CD4-positive, alpha-beta T cell (primary cell): ENCODE measurements at regions of chr14 and their contacts with region 1.

Region 1: DNA sequence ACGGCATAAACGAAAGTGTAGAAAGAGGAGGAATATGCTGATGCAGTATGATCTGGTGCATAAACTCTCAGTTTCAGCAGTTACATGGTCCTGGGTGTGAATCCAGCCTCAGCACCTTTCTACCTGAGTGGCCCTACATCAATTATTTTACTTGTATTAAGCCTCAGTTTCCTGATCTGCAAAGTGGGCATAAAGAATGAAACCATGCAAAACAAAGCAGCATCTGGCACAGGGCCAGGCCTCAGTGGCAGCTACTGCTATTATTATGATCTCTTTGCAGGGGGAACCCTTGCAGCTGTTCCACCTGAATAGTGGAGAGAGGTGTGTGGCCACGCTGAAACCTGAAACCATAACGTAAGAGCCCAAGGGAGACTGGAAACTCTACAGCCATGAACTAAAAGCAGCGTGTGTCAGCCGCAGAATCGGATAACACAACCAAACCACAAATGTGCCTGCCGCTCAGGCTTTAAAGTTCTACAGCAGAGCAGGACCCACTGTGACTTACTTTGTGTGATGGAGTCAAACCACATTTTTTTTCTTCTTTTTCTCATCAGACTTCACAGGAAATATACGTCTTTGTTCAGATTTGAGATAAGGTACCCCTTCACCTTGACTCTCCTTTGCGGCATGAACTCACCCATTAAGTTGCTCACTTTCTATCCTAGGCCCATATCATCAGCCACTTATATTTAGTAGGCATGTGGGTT is 29.2 kb upstream of the FOS start:
- DNase-seq: peak; percentile 67 to 97 (median 76)
- ATAC-seq: peak; percentile 72
- H3K4me3 ChIP-seq: peak overlapping the region; percentile 19
- H3K4me3 Mint-ChIP-seq: peak overlapping the region; percentile 50
- H3K27ac ChIP-seq: peak overlapping the region; percentile 75 to 78
- H3K27ac Mint-ChIP-seq: peak overlapping the region; percentile 87
- H3K4me1 ChIP-seq: peaks cover 68% of the 10 kb centered on the region
- H3K4me1 Mint-ChIP-seq: peaks cover 75% of the 10 kb centered on the region
- H3K27me3 ChIP-seq: no peaks in the 10 kb centered on the region
- H3K27me3 Mint-ChIP-seq: no peaks in the 10 kb centered on the region
- CTCF ChIP-seq: no peak

Region 2: GRCh38 chr14:75158843-75159614 is 90.4 kb before region 1 on chr14:
- CTCF ChIA-PET with region 1: no interaction called
- POLR2A ChIA-PET with region 1: no interaction called
- intact Hi-C with region 1: loop called in 1 of 2 experiments (anchors 5 kb)
- DNase-seq: no peak
- ATAC-seq: no peak
- H3K4me3 ChIP-seq: no peak overlapping the region
- H3K4me3 Mint-ChIP-seq: peak overlapping the region; percentile 3
- H3K27ac ChIP-seq: no peak overlapping the region
- H3K27ac Mint-ChIP-seq: peak overlapping the region; percentile 57
- H3K4me1 ChIP-seq: peaks cover 37% of the 10 kb centered on the region
- H3K4me1 Mint-ChIP-seq: peaks cover 67% of the 10 kb centered on the region
- H3K27me3 ChIP-seq: no peaks in the 10 kb centered on the region
- H3K27me3 Mint-ChIP-seq: no peaks in the 10 kb centered on the region
- CTCF ChIP-seq: no peak

Region 3: DNA sequence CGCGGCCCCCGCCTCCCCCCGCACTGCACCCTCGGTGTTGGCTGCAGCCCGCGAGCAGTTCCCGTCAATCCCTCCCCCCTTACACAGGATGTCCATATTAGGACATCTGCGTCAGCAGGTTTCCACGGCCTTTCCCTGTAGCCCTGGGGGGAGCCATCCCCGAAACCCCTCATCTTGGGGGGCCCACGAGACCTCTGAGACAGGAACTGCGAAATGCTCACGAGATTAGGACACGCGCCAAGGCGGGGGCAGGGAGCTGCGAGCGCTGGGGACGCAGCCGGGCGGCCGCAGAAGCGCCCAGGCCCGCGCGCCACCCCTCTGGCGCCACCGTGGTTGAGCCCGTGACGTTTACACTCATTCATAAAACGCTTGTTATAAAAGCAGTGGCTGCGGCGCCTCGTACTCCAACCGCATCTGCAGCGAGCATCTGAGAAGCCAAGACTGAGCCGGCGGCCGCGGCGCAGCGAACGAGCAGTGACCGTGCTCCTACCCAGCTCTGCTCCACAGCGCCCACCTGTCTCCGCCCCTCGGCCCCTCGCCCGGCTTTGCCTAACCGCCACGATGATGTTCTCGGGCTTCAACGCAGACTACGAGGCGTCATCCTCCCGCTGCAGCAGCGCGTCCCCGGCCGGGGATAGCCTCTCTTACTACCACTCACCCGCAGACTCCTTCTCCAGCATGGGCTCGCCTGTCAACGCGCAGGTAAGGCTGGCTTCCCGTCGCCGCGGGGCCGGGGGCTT is 29.2 kb after region 1 on chr14 and contains the start of gene FOS:
- CTCF ChIA-PET with region 1: interaction called, 3 read pairs
- POLR2A ChIA-PET with region 1: interaction called, 6 read pairs
- intact Hi-C with region 1: loop called in 1 of 2 experiments (anchors 1 kb)
- DNase-seq: peak; percentile 79 to 97 (median 86)
- ATAC-seq: peak; percentile 66
- H3K4me3 ChIP-seq: peak within 1 kb of the TSS; percentile 88
- H3K4me3 Mint-ChIP-seq: peak within 1 kb of the TSS; percentile 94
- H3K27ac ChIP-seq: peak within 1 kb of the TSS; percentile 69 to 82
- H3K27ac Mint-ChIP-seq: peak within 1 kb of the TSS; percentile 92
- H3K4me1 ChIP-seq: peaks cover 71% of the 10 kb centered on the region
- H3K4me1 Mint-ChIP-seq: peaks cover 56% of the 10 kb centered on the region
- H3K27me3 ChIP-seq: peaks cover 4% of the 10 kb centered on the region in 2 experiments
- H3K27me3 Mint-ChIP-seq: peaks cover 73% of the 10 kb centered on the region
- CTCF ChIP-seq: no peak
- total RNA-seq, gene FOS: 1,565 to 1,685 TPM

Region 4: DNA sequence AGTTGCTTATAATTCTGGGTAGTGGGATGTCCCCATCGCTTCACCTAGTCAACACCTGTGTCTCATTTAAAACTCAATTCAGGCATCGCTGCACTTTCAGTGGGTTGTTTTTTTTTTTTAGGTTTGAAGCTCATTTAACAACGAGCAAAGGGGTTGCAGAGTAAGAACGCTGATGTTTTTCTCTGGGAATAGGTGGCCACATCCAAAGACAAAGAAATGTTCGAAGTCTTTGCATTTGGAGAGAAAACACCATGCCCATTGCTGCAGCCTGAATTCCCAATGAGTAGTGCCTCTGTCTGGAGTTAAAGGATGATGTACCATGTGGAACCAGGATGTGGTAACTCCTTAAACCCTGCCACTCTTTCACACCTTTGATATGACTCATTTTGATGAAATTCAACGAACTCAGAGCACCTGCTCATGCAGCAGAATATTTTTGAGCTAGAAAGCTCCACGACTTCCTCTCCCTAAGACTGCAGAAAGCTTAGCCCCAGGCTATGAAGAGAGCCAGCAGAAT is 237.8 kb after region 1 on chr14:
- CTCF ChIA-PET with region 1: no interaction called
- POLR2A ChIA-PET with region 1: no interaction called
- intact Hi-C with region 1: no loop called
- DNase-seq: peak in 4 of 14 experiments; percentile 8 to 56 (median 36)
- ATAC-seq: peak; percentile 30
- H3K4me3 ChIP-seq: no peak overlapping the region
- H3K4me3 Mint-ChIP-seq: no peak overlapping the region
- H3K27ac ChIP-seq: no peak overlapping the region
- H3K27ac Mint-ChIP-seq: no peak overlapping the region
- H3K4me1 ChIP-seq: peaks cover 13% of the 10 kb centered on the region
- H3K4me1 Mint-ChIP-seq: peaks cover 13% of the 10 kb centered on the region
- H3K27me3 ChIP-seq: no peaks in the 10 kb centered on the region
- H3K27me3 Mint-ChIP-seq: no peaks in the 10 kb centered on the region
- CTCF ChIP-seq: no peak